Motor neuron (in vitro differentiated cells): ENCODE measurements at regions of chr3 and their contacts with region 1.

Region 1: DNA sequence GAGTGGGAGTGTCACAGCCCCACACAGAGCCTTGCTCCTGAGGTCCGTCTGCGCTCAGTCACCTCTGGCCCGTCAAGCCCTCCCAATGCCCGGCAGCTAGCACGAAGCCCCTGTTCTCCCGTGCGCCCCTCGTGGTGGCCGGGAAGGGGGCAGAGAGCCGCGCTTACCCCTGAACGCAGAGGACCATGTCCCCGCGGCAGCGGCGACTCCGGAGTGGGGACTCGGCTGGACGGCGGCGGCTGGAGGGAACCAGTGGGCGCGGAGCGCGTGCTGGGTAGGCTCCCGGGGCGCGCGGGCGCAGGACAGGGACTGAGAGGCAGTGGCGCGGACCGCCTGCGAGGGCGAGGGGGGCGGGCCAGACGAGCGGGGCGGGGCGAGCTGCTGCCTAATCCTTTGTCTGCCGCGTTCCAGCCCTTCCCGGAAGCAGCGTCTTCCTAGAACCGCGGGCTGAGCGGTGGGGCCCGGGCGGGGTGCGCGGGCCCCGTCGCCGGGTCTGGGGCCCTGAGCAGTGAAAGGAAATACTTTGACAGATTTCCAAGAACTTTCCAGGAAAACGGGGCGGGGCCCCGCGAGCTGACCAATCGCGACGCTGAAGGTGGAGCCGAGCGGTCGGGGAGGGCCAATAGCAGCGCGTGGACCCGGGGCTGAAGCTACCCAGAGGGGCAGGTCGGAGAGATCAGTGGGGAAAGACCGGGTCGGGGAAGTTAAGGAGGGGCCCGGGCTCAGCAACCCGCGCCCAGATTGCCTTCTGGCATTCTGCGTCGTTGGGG is at the start of gene CISH:
- ATAC-seq: peak; percentile 73 to 85 (median 82)
- H3K4me3 ChIP-seq: peak within 1 kb of the TSS; percentile 35 to 66 (median 47)
- H3K27ac ChIP-seq: peak within 1 kb of the TSS in 1 of 2 donors; percentile 15
- H3K4me1 ChIP-seq: peaks cover 6 to 9% of the 10 kb centered on the region in 2 donors
- total RNA-seq, gene CISH: 0.76 to 5.2 (median 1.8) TPM

Region 2: DNA sequence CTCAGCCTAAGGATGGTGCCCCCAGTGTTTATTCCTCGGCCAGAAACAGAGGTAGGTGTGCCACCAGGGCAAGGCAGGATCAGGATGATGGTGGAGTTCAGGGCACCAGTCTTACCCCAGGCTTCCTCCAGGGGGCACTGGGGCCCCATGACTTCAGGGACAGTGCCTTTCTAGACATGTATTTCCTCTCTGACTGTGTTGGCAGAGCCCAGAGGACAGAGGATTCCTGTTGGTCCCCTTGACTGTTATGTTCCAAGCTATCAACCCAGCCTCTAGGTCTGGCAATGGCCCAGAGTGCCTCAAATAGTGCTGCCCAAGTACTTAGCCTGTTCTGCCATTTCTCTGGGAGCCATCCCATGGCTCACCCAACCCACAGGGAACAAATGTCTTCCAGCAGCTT is 39.5 kb before region 1 on chr3:
- in situ Hi-C with region 1: loop called in 1 of 9 experiments (anchors 5 kb)
- ATAC-seq: peak in 4 of 8 experiments; percentile 3 to 19 (median 6)
- H3K4me3 ChIP-seq: no peak overlapping the region
- H3K27ac ChIP-seq: no peak overlapping the region
- H3K4me1 ChIP-seq: peaks cover 9 to 14% of the 10 kb centered on the region in 2 donors

Region 3: DNA sequence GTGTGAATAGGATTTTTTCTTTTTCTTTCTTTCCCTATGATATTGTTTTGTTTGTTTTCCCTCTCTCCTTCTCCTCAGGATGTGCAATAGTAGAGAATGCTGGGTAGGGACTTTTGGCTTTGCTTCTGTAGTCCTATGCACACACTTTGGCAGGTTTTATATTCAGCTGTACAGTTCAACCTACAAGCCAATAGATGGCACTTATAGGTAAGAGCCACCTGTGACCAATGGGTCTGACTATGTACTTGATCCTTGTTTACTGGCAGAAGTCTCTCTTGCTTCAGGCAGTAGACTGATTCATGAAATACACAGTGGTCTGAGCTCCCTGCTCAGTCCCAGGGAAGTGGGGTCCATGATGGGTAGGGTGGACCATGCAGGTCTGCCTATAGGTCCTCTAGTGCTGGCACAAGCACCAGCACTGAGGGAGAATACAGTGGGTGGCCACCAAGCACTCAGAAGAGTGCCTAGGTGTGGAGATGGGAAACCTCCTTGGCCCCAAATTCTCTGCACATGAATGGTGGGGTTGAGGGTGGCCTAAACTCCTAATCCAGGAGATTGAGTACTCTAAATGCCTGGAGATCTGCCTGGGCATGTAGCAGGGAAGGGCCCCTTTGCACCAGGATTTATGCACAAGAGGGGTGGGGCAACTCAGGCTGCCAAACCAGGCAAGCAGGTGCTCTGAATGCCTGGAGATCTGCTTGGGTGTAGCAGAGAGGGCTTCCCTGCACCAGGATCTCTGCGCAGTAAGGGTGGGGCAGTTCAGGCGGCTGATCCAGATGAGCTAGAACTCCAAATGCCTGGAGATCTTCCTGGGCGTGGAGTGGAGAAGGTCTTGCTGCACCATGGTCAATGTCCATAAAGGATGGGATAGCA is 239.2 kb after region 1 on chr3:
- in situ Hi-C with region 1: no loop called
- ATAC-seq: peak in 3 of 8 experiments; percentile 30 to 93 (median 72)
- H3K4me3 ChIP-seq: no peak overlapping the region
- H3K27ac ChIP-seq: no peak overlapping the region
- H3K4me1 ChIP-seq: no peaks in the 10 kb centered on the region

Region 4: DNA sequence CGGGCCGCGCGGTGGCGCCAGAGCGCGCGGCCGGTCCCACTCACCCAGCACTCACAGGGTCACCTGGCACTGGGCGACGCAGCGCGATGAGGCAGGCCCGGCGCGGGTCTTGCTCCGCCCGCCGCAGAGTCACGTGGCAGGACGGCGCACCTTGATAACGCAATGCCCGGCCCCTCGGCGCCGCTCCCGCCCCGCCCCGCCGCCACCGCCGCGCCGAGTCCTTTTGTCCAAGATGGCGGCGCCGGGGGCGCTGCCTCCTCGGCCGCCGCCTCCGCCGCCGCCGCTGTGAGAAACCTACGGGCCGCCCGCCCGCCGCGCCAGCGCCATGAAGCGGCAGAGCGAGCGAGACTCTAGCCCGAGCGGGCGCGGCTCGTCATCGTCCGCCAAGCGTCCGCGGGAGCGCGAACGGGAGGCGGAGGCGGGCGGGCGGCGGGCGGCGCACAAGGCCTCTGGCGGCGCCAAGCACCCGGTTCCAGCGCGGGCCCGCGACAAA is 779.5 kb after region 1 on chr3 and contains the start of gene RBM15B:
- in situ Hi-C with region 1: loop called in 3 of 9 experiments (anchors 25 kb)
- ATAC-seq: peak; percentile 81 to 97 (median 94)
- H3K4me3 ChIP-seq: peak within 1 kb of the TSS; percentile 68 to 91 (median 81)
- H3K27ac ChIP-seq: peak within 1 kb of the TSS; percentile 95 to 98
- H3K4me1 ChIP-seq: peaks cover 33 to 49% of the 10 kb centered on the region in 2 donors
- total RNA-seq, gene RBM15B: 16.0 to 45.2 (median 25.9) TPM